ENCODE measurements at regions of chr1 and their contacts with region 1.

Region 1: GRCh38 chr1:212070720-212071302 is 35.3 kb downstream of the DTL start:
- DNase-seq: no peak
- H3K4me3 ChIP-seq: no peak overlapping the region
- H3K27ac ChIP-seq: no peak overlapping the region
- H3K4me1 ChIP-seq: no peaks in the 10 kb centered on the region
- H3K27me3 ChIP-seq: no peaks in the 10 kb centered on the region
- CTCF ChIP-seq: peak; percentile 82 to 84 (median 83)
- EP300 ChIP-seq: no peak
- POLR2A ChIP-seq: no peak

Region 2: DNA sequence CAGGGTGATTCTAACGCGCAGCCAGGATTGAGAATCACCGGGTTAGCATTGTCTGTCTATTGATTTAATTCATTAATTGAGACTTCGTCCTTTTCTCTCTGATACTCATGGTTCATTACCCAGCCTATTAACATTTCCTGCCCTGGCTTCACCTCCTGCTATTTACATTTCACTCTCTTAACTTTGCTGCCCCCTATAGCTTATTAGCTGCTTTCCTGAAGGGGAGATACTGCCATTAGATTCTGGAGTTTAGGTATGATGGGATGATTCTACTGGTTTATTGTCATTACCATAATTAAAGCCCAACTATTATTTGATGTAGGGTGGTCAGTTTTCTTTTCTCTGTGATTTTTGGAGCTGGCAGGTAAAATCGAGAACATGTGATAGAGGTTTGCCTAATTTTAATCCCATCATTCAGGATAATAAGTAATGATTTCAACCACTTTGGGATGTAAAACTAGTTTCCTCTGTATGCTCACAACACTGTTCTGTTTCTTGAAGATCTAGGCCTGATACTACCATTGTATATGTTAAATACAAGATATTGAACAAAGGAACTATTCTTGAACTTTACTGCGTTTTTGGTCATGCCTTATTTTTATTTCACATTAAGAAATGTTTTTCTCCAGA is 220.8 kb after region 1 on chr1:
- intact Hi-C with region 1: loop called (anchors 2 kb)
- DNase-seq: no peak
- H3K4me3 ChIP-seq: peak overlapping the region in 2 of 4 donors; percentile 1 to 7
- H3K27ac ChIP-seq: peak overlapping the region in 1 of 4 donors; percentile 16
- H3K4me1 ChIP-seq: peaks cover 77 to 93% (median 81%) of the 10 kb centered on the region in 4 donors
- H3K27me3 ChIP-seq: no peaks in the 10 kb centered on the region
- CTCF ChIP-seq: peak; percentile 53 to 57 (median 56)
- EP300 ChIP-seq: no peak
- POLR2A ChIP-seq: no peak

Region 3: DNA sequence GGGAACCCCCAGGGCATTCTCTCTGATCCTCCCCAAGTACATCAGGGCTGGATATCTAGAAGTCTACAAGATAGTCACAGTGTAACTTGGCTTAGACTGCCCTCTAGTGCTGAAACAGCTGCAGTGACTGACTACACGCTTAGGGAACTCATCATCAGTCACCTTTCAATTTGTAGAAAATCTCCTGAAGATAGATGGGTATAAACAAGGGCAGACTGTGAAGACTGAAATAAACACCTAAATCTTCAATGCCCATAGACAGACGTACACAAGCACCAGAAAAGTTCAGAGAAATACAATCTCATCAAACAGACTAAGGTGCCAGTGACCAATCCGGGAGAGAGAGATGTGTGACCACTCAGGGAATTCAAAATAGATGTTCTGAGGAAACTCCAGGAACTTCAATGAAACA is 297.3 kb after region 1 on chr1:
- intact Hi-C with region 1: loop called (anchors 2 kb)
- DNase-seq: no peak
- H3K4me3 ChIP-seq: no peak overlapping the region
- H3K27ac ChIP-seq: no peak overlapping the region
- H3K4me1 ChIP-seq: peaks cover 8 to 38% (median 33%) of the 10 kb centered on the region in 4 donors
- H3K27me3 ChIP-seq: no peaks in the 10 kb centered on the region
- CTCF ChIP-seq: peak; percentile 77 to 95 (median 82)
- EP300 ChIP-seq: no peak
- POLR2A ChIP-seq: no peak

Region 4: GRCh38 chr1:212595787-212596714 is 525.2 kb after region 1 on chr1:
- intact Hi-C with region 1: no loop called
- DNase-seq: peak; percentile 37
- H3K4me3 ChIP-seq: peak overlapping the region in 1 of 4 donors; percentile 18
- H3K27ac ChIP-seq: peak overlapping the region; percentile 24 to 65 (median 32)
- H3K4me1 ChIP-seq: peaks cover 0 to 11% (median 9%) of the 10 kb centered on the region in 4 donors
- H3K27me3 ChIP-seq: no peaks in the 10 kb centered on the region
- CTCF ChIP-seq: peak; percentile 30 to 52 (median 44)
- EP300 ChIP-seq: no peak
- POLR2A ChIP-seq: no peak

Measured in esophagus muscularis mucosa (tissue), 4 donors.